ENCODE measurements at regions of chr9 and their contacts with region 1.

Region 1: DNA sequence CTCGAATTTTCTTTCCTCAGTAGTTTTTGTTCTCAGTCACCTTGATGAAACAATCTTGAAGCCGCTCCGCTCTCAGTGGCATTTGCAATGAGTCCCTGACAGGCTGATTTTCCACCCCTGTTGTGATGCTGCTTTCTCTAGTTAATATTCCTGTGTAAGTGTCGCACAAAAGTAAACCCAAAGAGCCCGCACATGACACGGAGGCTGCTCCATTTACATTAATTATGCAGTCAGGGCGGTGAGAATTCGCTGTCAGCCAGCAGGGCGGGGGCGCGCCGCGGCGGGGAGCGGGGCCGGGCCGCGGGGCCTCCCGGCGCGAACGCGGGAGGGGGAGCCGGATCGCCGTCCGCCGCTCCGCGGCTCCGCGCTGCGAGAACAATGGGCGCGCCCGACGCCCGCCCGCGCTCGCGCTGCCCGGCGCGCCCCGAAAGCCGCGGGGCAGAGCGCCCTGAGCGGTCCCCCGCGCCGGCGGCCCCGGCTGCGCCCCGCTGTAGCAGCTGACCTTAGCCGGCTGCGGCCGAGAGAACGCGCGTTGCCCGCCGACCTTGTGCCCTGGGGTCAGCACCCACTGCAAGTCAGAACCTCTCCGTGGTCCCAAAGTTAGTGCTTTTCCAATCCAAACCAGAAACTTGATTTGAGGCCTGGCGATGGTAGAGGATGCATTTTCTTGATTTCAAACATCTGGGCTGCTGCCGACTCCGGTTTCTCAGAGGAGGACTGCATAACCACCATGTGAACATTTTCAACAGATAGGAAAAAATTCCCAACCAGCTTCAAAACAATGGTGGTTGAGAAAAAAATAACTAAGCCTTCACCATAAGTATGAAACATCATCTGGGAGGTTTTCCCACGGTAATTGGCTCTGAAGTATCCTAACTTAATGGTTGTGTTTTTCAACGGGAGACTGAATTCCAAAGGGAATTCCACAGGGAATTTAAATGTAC is 142.6 kb downstream of the PBX3 start:
- DNase-seq: no peak
- ATAC-seq: peak; percentile 79
- H3K4me3 ChIP-seq: peak overlapping the region; percentile 89
- H3K27ac ChIP-seq: no peak overlapping the region
- H3K4me1 ChIP-seq: peaks cover 7% of the 10 kb centered on the region; the same call in 1 of the 2 replicates
- H3K27me3 ChIP-seq: no peaks in the 10 kb centered on the region
- CTCF ChIP-seq: no peak
- EP300 ChIP-seq: no peak
- POLR2A ChIP-seq: no peak
- RAD21 ChIP-seq: no peak

Region 2: GRCh38 chr9:125904155-125904851 is 14.6 kb after region 1 on chr9:
- CTCF ChIA-PET with region 1: interaction called, 5 read pairs
- POLR2A ChIA-PET with region 1: interaction called, 12 read pairs
- RAD21 ChIA-PET with region 1: no interaction called
- SMC1A ChIA-PET with region 1: interaction called, 20 read pairs
- in situ Hi-C with region 1: no loop called
- intact Hi-C with region 1: no loop called
- DNase-seq: no peak
- ATAC-seq: peak; percentile 72
- H3K4me3 ChIP-seq: no peak overlapping the region
- H3K27ac ChIP-seq: no peak overlapping the region
- H3K4me1 ChIP-seq: no peaks in the 10 kb centered on the region
- H3K27me3 ChIP-seq: no peaks in the 10 kb centered on the region
- CTCF ChIP-seq: no peak
- EP300 ChIP-seq: no peak
- POLR2A ChIP-seq: no peak
- RAD21 ChIP-seq: no peak